ENCODE measurements at regions of chr18 and their contacts with region 1.

Region 1: GRCh38 chr18:9726175-9726574 is 18.1 kb downstream of the RAB31 start:
- DNase-seq: no peak
- H3K4me3 ChIP-seq: no peak overlapping the region
- CTCF ChIP-seq: no peak
- POLR2A ChIP-seq: no peak

Region 2: DNA sequence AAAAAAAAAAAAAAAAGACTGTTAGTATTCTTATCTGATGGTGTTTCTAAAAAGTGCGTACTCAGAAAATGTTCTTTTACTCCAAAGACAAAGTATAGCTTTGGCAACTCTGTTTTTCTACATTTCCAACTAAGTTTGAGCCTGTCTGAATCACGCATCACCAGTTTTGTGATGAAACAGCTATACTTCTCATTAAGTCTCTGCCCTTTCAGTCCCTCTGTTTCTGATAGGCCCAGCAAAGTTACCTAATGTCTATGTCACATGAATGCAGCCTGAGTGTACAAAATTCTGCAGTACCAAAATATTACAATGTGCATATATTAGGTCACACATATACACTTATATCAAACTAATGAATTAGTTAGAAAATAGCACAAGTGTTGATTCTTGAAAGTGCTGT is 369.2 kb before region 1 on chr18:
- intact Hi-C with region 1: loop called (anchors 5 kb)
- DNase-seq: no peak
- H3K4me3 ChIP-seq: no peak overlapping the region
- CTCF ChIP-seq: no peak
- POLR2A ChIP-seq: no peak

Region 3: GRCh38 chr18:10006311-10006893 is 280.2 kb after region 1 on chr18:
- intact Hi-C with region 1: no loop called
- DNase-seq: peak in 1 of 2 donors; percentile 45
- H3K4me3 ChIP-seq: no peak overlapping the region
- CTCF ChIP-seq: no peak
- POLR2A ChIP-seq: no peak